ENCODE measurements at regions of chr6 and their contacts with region 1.

Region 1: DNA sequence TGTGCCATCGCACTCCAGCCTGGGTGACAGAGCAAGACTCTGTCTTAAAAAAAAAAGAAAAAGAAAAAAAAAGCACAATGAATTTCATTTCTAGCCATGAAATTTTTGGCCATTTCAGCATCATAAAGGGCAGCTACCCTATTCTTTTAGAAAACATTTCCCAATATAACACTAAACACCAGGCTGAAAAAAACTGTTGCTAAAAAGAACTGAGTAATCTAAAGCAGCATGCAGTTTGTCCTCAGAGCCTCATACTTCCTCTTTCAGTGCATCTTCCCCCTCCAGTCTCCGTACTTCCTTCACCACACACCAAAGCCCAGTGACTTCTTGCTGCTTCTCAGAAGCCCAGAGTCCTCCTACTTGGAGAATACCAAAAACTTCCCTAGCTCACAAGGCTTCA is 5.6 kb upstream of the IFNGR1 start:
- DNase-seq: peak; percentile 70
- ATAC-seq: peak; percentile 76
- H3K4me3 ChIP-seq: no peak overlapping the region
- H3K27ac ChIP-seq: peak overlapping the region; percentile 84
- H3K4me1 ChIP-seq: peaks cover 67% of the 10 kb centered on the region
- H3K27me3 ChIP-seq: no peaks in the 10 kb centered on the region
- CTCF ChIP-seq: no peak
- EP300 ChIP-seq: 0 out of 4 replicates have a peak, but pooled peaks of 1 of the 2 experiments have one; percentile 48
- POLR2A ChIP-seq: no peak
- RAD21 ChIP-seq: no peak

Region 2: DNA sequence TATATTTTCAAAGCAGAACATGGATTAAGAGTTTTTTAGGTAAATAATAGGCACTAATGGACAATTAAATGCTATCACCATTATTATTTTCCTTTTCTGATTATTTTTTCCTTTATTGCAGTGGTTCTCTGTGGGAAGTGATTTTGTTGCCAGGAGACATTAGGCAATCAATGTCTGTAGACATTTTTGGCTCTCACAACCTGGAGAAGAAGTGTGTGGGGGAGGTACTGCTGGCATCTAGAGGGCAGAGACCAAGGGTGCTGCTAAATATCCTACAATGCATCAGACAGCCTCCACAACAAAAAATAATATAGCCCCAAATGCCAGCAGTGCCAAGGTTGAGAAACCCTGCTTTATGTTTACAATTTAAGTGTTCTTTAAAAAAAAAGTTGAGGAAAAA is 13.9 kb before region 1 on chr6:
- CTCF ChIA-PET with region 1: interaction called, 11 read pairs
- POLR2A ChIA-PET with region 1: interaction called, 14 read pairs
- RAD21 ChIA-PET with region 1: interaction called, 5 read pairs
- SMC1A ChIA-PET with region 1: interaction called, 25 read pairs
- in situ Hi-C with region 1: no loop called
- intact Hi-C with region 1: no loop called
- DNase-seq: no peak
- ATAC-seq: no peak
- H3K4me3 ChIP-seq: no peak overlapping the region
- H3K27ac ChIP-seq: no peak overlapping the region
- H3K4me1 ChIP-seq: peaks cover 9% of the 10 kb centered on the region; the same call in 1 of the 2 replicates
- H3K27me3 ChIP-seq: no peaks in the 10 kb centered on the region
- CTCF ChIP-seq: no peak
- EP300 ChIP-seq: no peak
- POLR2A ChIP-seq: no peak
- RAD21 ChIP-seq: no peak

Region 3: DNA sequence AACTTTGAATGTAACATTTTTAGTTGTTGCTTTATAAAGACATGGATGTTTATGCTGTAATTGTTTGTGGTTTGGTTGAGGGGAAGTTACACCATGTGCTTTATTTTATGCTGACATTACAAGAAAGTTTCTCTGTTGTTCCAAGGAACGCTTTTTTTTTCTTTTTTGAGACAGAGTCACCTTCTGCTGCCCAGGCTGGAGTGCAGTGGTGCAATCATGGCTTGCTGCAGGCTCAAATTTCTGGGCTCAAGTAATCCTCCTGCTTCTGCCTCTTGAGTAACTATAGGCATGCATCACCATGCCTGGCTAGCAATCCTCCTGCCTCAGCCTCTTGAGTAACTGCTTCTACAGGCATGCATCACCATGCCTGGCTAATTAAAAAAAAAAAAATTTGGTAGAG is 15.4 kb after region 1 on chr6:
- CTCF ChIA-PET with region 1: interaction called, 3 read pairs
- POLR2A ChIA-PET with region 1: interaction called, 36 read pairs
- RAD21 ChIA-PET with region 1: interaction called, 6 read pairs
- SMC1A ChIA-PET with region 1: interaction called, 77 read pairs
- in situ Hi-C with region 1: no loop called
- intact Hi-C with region 1: no loop called
- DNase-seq: no peak
- ATAC-seq: no peak
- H3K4me3 ChIP-seq: no peak overlapping the region
- H3K27ac ChIP-seq: no peak overlapping the region
- H3K4me1 ChIP-seq: no peaks in the 10 kb centered on the region
- H3K27me3 ChIP-seq: no peaks in the 10 kb centered on the region
- CTCF ChIP-seq: no peak
- EP300 ChIP-seq: no peak
- POLR2A ChIP-seq: no peak
- RAD21 ChIP-seq: no peak

Region 4: DNA sequence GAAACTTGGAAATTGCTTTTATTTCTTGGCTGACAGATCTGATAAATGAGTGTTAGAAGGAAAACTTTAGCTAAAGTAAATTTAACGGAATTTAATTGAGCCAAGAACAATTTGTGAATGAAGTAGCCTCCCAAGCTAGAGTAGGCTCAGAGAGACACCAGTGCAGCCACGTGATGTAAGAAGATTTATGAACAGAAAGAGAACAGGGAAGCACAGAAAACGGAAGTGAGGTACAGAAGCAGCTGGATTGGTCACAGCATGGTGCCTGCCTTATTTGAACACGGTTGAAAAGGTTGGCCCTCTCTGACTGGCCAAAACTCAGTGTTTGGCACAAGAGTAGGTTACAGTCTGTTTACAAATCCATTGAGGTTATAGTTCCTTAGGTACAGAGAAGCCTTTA is 23.9 kb after region 1 on chr6:
- CTCF ChIA-PET with region 1: interaction called, 8 read pairs
- POLR2A ChIA-PET with region 1: interaction called, 12 read pairs
- RAD21 ChIA-PET with region 1: interaction called, 80 read pairs
- SMC1A ChIA-PET with region 1: interaction called, 29 read pairs
- in situ Hi-C with region 1: no loop called
- intact Hi-C with region 1: no loop called
- DNase-seq: no peak
- ATAC-seq: peak; percentile 84
- H3K4me3 ChIP-seq: no peak overlapping the region
- H3K27ac ChIP-seq: peak overlapping the region; percentile 37; the same call in 1 of the 2 replicates
- H3K4me1 ChIP-seq: peaks cover 11% of the 10 kb centered on the region
- H3K27me3 ChIP-seq: no peaks in the 10 kb centered on the region
- CTCF ChIP-seq: no peak
- EP300 ChIP-seq: no peak
- POLR2A ChIP-seq: no peak
- RAD21 ChIP-seq: no peak

Region 5: DNA sequence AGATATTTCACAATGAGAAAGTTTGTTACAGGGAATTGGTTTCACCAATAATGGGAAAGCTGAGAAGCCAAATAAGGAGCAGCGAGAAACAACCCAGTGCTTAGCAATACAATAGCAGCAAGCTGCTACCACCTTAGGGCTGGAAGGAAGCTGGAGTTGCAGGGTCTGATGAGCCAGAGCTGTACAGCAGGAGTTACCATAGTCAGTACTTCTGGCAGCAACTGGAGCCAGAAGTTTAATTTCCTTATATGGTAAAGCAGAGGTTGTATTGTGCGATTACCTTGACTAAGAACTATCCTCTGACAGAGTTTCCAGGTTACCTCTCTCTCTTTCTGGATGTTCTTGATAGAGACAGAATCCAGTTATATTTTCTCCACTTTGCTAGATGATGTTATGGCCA is 406.5 kb after region 1 on chr6:
- CTCF ChIA-PET with region 1: no interaction called
- POLR2A ChIA-PET with region 1: interaction called, 10 read pairs
- RAD21 ChIA-PET with region 1: no interaction called
- SMC1A ChIA-PET with region 1: no interaction called
- in situ Hi-C with region 1: no loop called
- intact Hi-C with region 1: no loop called
- DNase-seq: no peak
- ATAC-seq: peak; percentile 81
- H3K4me3 ChIP-seq: no peak overlapping the region
- H3K27ac ChIP-seq: peak overlapping the region; percentile 76
- H3K4me1 ChIP-seq: peaks cover 46% of the 10 kb centered on the region
- H3K27me3 ChIP-seq: no peaks in the 10 kb centered on the region
- CTCF ChIP-seq: no peak
- EP300 ChIP-seq: no peak
- POLR2A ChIP-seq: no peak
- RAD21 ChIP-seq: no peak

Measured in GM12878 (cell line).